ENCODE measurements at regions of chr14 and their contacts with region 1.

Region 1: GRCh38 chr14:63470962-63471793 is 72.0 kb downstream of the PPP2R5E start:
- DNase-seq: peak; percentile 91
- ATAC-seq: peak; percentile 90
- H3K4me3 ChIP-seq: no peak overlapping the region
- H3K27ac ChIP-seq: peak overlapping the region; percentile 54; the same call in 1 of the 2 replicates
- H3K4me1 ChIP-seq: peaks cover 23% of the 10 kb centered on the region
- H3K27me3 ChIP-seq: no peaks in the 10 kb centered on the region
- CTCF ChIP-seq: no peak
- POLR2A ChIP-seq: no peak
- RAD21 ChIP-seq: no peak

Region 2: DNA sequence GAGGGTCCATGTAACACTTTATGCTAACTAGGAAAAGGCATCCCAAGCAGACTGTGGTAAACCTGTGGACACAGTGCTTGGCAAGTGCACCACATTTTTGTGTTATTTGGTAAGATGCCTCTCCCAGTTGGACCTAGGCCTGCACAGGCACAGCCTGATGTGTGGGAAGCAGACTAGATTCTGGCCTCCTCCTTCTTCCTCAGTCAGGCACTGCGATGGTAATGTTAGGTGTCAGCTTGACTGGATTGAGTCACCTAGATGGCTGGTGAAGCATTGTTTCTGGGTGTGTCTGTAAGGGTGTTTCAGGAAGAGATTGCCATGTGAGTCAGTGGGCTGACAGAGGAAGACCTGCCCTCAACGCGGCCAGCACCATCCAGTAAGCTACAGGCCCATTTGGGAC is 292.3 kb before region 1 on chr14:
- CTCF ChIA-PET with region 1: no interaction called
- POLR2A ChIA-PET with region 1: no interaction called
- dilution Hi-C with region 1: no loop called
- in situ Hi-C with region 1: no loop called
- intact Hi-C with region 1: no loop called
- DNase-seq: peak; percentile 46
- ATAC-seq: no peak
- H3K4me3 ChIP-seq: no peak overlapping the region
- H3K27ac ChIP-seq: no peak overlapping the region
- H3K4me1 ChIP-seq: peaks cover 3% of the 10 kb centered on the region; the same call in 1 of the 2 replicates
- H3K27me3 ChIP-seq: no peaks in the 10 kb centered on the region; the same call in 1 of the 2 replicates
- CTCF ChIP-seq: no peak
- POLR2A ChIP-seq: no peak
- RAD21 ChIP-seq: no peak

Region 3: DNA sequence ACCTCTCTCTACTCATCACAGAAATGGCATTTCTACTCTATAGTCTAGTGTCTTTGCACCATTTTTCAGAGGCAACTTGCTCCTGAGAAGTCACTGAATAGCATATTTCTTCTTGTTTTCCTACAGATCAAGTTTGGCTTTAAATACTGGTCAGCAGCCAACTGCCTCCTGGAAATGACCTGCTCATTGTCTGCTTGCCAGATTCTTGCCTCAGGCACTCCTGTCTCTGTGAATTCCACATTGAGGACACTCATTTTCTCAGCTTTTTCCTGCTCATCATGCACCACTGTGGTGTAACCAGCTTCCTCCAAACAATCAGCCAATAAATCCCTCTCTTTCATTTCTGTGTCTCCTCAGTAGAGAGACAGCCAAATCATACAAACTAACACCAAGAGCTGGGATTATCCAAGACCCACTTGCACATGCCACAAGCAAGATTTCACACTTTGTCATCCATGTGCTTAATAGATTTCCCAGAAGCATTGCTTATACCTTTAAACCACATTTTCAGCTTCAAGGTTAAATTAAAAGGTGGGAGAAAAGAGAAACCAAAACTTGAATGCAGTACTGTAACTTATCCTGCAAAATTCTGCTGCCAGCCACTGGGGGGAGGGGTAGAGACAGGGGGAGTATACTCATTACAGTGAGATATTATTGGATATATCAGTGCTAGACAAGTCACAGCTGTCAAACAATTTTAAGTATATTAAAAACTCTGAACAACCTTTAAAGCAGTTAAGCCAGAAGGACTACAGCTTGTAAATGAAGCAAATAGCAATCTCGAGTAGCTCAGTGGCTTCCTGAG is 33.0 kb before region 1 on chr14:
- CTCF ChIA-PET with region 1: no interaction called
- POLR2A ChIA-PET with region 1: no interaction called
- dilution Hi-C with region 1: no loop called
- in situ Hi-C with region 1: no loop called
- intact Hi-C with region 1: loop called (anchors 5 kb)
- DNase-seq: peak; percentile 92
- ATAC-seq: peak; percentile 56
- H3K4me3 ChIP-seq: peak overlapping the region; percentile 36; the same call in 1 of the 2 replicates
- H3K27ac ChIP-seq: peak overlapping the region; percentile 30; the same call in 1 of the 2 replicates
- H3K4me1 ChIP-seq: peaks cover 10% of the 10 kb centered on the region
- H3K27me3 ChIP-seq: no peaks in the 10 kb centered on the region
- CTCF ChIP-seq: no peak
- POLR2A ChIP-seq: no peak
- RAD21 ChIP-seq: no peak

Measured in IMR-90 (cell line).